PC-9 (cell line): ENCODE measurements at regions of chr3 and their contacts with region 1.

Region 1: DNA sequence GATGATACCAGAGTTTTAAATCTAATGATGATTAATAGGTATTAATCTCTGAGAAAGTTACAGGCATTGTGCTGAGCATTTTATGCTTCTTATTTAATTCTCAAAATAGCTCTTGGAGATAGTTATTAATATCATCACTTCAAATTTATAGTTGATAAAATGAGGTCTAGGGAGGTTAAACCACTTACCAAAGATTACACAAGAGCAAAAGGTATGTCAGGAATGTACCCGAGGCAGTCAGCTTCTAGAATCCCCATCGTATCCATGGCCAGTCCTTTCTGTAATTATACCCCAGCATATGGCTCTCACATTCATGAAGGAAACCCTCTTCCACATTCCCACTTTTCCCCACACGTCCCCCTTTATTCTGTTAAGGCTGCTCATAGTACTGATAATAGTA is 421.3 kb downstream of the PYDC2 start:
- DNase-seq: peak; percentile 36 to 63
- H3K4me3 ChIP-seq: no peak overlapping the region
- H3K27ac ChIP-seq: no peak overlapping the region
- H3K4me1 ChIP-seq: peaks cover 6% of the 10 kb centered on the region
- H3K27me3 ChIP-seq: no peaks in the 10 kb centered on the region
- CTCF ChIP-seq: no peak

Region 2: DNA sequence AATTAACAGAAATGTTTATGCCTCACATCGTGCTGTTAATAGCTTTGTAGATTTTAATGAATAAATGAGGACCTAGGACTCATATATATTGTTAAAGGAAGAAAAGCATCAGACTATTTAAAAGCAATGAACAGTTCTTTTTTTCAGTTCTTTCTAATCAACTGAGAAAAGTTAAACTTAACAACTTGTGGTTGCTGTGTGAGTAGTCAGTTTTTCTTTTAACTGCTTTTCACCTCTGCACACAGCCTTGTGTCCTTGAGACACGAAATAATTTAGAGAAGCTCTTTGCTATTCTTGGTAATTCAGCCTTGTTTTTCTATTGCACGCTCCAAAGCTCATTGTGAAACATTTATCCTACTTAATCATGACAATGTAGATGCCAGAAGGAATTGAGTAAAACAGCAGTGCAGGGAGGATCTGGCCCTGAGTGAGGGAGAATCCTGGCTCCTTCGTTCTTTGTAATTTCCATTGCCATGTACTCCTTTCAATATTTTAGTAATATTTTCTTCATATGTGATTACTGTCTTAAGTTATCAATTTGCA is 77.7 kb after region 1 on chr3:
- CTCF ChIA-PET with region 1: no interaction called
- POLR2A ChIA-PET with region 1: interaction called, 11 read pairs
- intact Hi-C with region 1: no loop called
- DNase-seq: no peak
- H3K4me3 ChIP-seq: no peak overlapping the region
- H3K27ac ChIP-seq: no peak overlapping the region
- H3K4me1 ChIP-seq: no peaks in the 10 kb centered on the region
- H3K27me3 ChIP-seq: no peaks in the 10 kb centered on the region
- CTCF ChIP-seq: no peak